Activated naive CD4-positive, alpha-beta T cell treated with anti-CD3 and anti-CD28 coated beads for 36 hours (primary cell): ENCODE measurements at regions of chr22 and their contacts with region 1.

Region 1: DNA sequence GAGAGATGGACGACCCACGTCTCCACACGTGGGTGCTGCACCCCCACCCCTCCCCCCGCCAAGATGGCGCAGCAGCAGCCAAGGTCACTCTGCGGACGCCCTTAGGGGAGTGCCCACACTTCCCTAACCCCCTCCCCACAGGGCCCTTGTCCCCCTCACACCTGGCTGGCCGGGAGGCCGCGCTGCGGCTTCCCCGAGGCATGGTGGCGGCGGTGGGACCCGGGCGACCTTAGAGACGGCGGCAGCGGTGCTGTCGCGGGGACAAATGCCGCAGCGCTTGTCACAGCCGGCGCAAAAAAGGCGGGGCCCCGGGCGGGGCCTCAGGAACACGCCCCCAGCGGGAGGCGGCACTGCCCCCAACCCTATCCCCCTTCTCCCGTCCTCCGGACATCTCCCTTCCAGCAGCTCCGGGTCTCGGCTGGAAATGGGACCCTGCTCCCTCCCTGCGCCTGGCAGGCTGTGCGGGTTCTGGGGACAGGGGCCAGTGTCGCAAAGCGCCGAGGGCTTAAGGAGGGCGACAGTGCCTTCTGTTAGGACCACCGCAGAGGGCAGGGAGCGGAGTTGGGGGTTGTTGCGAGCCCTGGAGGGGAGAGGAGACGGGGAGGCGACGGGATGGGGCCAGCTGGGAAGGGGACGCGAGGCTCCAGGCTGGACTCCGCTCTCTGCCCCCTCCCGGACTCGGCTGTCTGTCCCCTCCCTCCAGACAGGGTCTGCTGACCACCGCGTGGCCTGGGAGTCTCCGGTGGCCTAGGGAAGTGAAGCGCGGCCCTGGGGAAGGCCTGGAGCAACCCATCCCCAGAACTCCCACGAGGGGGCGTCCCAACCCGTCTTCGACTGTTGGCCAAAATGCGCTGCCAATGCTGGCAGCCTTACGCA is at the start of gene CHCHD10:
- DNase-seq: peak; percentile 79
- H3K4me3 Mint-ChIP-seq: peak within 1 kb of the TSS; percentile 77
- H3K27ac Mint-ChIP-seq: peak within 1 kb of the TSS; percentile 59
- H3K4me1 Mint-ChIP-seq: peaks cover 43% of the 10 kb centered on the region
- H3K27me3 Mint-ChIP-seq: no peaks in the 10 kb centered on the region
- total RNA-seq, gene CHCHD10: 190 to 191 TPM

Region 2: GRCh38 chr22:23539135-23539838 is 228.6 kb before region 1 on chr22:
- CTCF ChIA-PET with region 1: no interaction called
- intact Hi-C with region 1: loop called (anchors 2 kb)
- DNase-seq: peak; percentile 90
- H3K4me3 Mint-ChIP-seq: peak overlapping the region; percentile 22
- H3K27ac Mint-ChIP-seq: no peak overlapping the region
- H3K4me1 Mint-ChIP-seq: peaks cover 9% of the 10 kb centered on the region
- H3K27me3 Mint-ChIP-seq: no peaks in the 10 kb centered on the region

Region 3: DNA sequence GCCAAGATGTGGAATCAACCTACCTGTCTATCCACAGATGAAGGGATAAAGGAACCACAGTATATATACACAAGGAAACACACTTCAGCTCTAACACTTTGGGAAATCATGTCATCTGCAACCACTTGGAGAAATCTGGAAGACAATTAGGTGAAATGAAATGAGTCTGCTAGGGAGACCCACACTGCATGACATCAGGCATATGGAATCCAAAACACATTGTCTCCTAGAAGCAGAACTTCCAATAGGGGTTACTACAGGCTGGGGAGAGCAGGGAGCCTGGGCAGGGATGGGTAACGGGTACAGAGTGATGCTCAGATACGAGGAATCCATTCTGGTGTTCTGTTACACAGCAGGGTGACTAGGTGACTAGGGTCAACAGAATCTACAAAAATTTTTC is 58.8 kb before region 1 on chr22:
- CTCF ChIA-PET with region 1: interaction called, 4 read pairs
- intact Hi-C with region 1: loop called (anchors 1 kb)
- DNase-seq: no peak
- H3K4me3 Mint-ChIP-seq: no peak overlapping the region
- H3K27ac Mint-ChIP-seq: peak overlapping the region; percentile 79
- H3K4me1 Mint-ChIP-seq: peaks cover 63% of the 10 kb centered on the region
- H3K27me3 Mint-ChIP-seq: no peaks in the 10 kb centered on the region

Region 4: DNA sequence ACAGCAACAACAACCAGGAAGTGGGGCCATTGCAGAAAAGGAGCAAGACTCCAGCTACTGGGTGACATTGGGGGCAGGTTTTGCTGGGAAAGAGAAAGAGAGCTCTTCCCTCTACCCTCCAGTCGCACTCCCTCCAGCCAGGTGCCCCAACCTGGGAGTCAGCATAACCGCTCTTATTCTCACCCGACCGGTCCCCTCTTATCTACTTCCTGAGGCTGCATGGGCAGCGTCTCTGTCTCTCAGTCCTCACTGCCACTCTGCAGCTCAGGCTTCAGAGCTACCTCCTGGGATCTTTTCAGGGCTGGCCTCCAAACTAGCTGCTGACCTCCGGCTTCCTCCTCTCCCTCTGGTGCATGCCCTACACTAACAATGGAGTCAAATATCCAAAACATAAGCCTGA is 22.1 kb before region 1 on chr22:
- CTCF ChIA-PET with region 1: no interaction called
- intact Hi-C with region 1: no loop called
- DNase-seq: no peak
- H3K4me3 Mint-ChIP-seq: no peak overlapping the region
- H3K27ac Mint-ChIP-seq: no peak overlapping the region
- H3K4me1 Mint-ChIP-seq: peaks cover 10% of the 10 kb centered on the region
- H3K27me3 Mint-ChIP-seq: no peaks in the 10 kb centered on the region

Region 5: DNA sequence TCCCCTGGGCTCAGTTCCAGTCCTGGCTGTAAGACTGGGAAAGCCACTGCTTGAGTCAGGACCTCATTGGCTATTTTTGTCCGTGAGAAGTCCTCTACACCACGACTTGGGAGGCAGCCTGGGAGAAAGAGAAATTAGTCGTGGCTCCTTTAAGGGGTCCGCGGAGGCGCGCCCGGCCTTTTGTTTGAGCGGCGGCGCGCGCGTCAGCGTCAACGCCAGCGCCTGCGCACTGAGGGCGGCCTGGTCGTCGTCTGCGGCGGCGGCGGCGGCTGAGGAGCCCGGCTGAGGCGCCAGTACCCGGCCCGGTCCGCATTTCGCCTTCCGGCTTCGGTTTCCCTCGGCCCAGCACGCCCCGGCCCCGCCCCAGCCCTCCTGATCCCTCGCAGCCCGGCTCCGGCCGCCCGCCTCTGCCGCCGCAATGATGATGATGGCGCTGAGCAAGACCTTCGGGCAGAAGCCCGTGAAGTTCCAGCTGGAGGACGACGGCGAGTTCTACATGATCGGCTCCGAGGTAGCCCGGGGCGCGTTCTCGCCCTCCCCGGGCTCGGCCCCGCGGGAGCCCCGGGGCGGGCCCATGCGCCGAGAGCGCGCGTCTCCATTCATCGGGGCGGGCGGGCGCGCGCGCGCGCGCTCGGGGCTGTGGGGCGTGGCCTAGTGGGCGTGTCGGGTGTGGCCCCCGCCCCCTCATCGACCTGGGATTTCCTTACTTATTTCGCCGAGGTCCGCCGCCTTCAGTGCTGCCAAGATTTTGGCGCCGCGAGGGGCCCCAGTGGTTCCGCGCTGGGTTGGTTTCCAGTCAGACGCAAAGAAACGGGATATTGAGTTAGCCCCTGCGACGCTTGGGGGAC is 19.1 kb after region 1 on chr22 and contains the start of gene SMARCB1:
- CTCF ChIA-PET with region 1: interaction called, 19 read pairs
- intact Hi-C with region 1: loop called (anchors 1 kb)
- DNase-seq: peak; percentile 89
- H3K4me3 Mint-ChIP-seq: peak within 1 kb of the TSS; percentile 89
- H3K27ac Mint-ChIP-seq: peak within 1 kb of the TSS; percentile 95
- H3K4me1 Mint-ChIP-seq: peaks cover 34% of the 10 kb centered on the region
- H3K27me3 Mint-ChIP-seq: no peaks in the 10 kb centered on the region
- total RNA-seq, gene SMARCB1: 75.3 to 89.1 TPM

Region 6: GRCh38 chr22:23849009-23850006 is 81.4 kb after region 1 on chr22:
- CTCF ChIA-PET with region 1: interaction called, 11 read pairs
- intact Hi-C with region 1: no loop called
- DNase-seq: peak; percentile 88
- H3K4me3 Mint-ChIP-seq: no peak overlapping the region
- H3K27ac Mint-ChIP-seq: no peak overlapping the region
- H3K4me1 Mint-ChIP-seq: peaks cover 2% of the 10 kb centered on the region
- H3K27me3 Mint-ChIP-seq: peaks cover 3% of the 10 kb centered on the region

Region 7: GRCh38 chr22:23874871-23875270 is 107.0 kb after region 1 on chr22:
- CTCF ChIA-PET with region 1: no interaction called
- intact Hi-C with region 1: no loop called
- DNase-seq: no peak
- H3K4me3 Mint-ChIP-seq: no peak overlapping the region
- H3K27ac Mint-ChIP-seq: no peak overlapping the region
- H3K4me1 Mint-ChIP-seq: no peaks in the 10 kb centered on the region
- H3K27me3 Mint-ChIP-seq: no peaks in the 10 kb centered on the region

Region 8: GRCh38 chr22:24423519-24424000 is 655.6 kb after region 1 on chr22:
- CTCF ChIA-PET with region 1: no interaction called
- intact Hi-C with region 1: no loop called
- DNase-seq: peak; percentile 58
- H3K4me3 Mint-ChIP-seq: peak overlapping the region; percentile 69
- H3K27ac Mint-ChIP-seq: no peak overlapping the region
- H3K4me1 Mint-ChIP-seq: peaks cover 25% of the 10 kb centered on the region
- H3K27me3 Mint-ChIP-seq: no peaks in the 10 kb centered on the region